ENCODE measurements at regions of chr6 and their contacts with region 1.

Region 1: GRCh38 chr6:39239527-39240154 is 10.4 kb upstream of the KCNK5 start:
- DNase-seq: no peak
- H3K4me3 ChIP-seq: no peak overlapping the region
- H3K27ac ChIP-seq: peak overlapping the region in 3 of 4 donors; percentile 9 to 35 (median 23)
- H3K4me1 ChIP-seq: peaks cover 0 to 8% (median 2%) of the 10 kb centered on the region in 4 donors
- H3K27me3 ChIP-seq: no peaks in the 10 kb centered on the region
- CTCF ChIP-seq: no peak
- EP300 ChIP-seq: no peak
- POLR2A ChIP-seq: no peak

Region 2: DNA sequence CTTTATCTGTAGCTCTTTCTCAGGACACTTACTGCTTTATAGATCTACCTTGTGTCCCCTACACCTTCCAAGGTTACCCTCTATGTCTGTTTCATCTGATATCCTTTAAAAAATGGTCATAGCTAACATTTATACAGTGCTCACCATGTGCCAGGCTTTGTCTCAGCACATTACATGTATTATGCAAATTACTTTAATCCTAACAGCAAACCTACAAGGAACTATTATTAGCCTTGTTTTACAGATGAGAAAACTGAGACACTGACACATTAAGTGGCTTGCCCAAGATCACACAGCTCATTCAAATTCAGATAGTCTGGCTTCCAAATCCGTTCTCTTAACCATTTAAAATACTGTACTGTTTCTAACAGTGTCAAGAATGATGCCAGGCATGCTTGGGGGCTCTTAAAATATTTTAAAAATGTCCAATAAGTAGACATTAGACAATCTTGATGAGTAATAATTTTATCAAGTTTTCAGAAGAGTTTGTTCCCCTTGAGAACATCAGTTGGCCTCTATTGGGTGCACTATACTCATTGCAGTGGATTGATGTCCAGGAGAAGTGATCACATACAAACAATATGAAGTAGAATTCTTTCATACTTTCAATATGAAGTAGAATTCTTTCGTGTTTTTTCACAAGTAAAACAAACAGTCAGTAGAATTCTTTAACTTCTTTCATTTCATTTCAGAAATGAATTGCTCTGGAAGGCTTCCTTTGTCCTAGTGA is 455.0 kb before region 1 on chr6:
- in situ Hi-C with region 1: no loop called
- intact Hi-C with region 1: no loop called
- DNase-seq: no peak
- H3K4me3 ChIP-seq: no peak overlapping the region
- H3K27ac ChIP-seq: no peak overlapping the region
- H3K4me1 ChIP-seq: no peaks in the 10 kb centered on the region
- H3K27me3 ChIP-seq: peaks cover 19% of the 10 kb centered on the region
- CTCF ChIP-seq: no peak
- EP300 ChIP-seq: no peak
- POLR2A ChIP-seq: no peak

Region 3: GRCh38 chr6:40244699-40245098 is 1005.1 kb after region 1 on chr6:
- in situ Hi-C with region 1: no loop called
- intact Hi-C with region 1: loop called (anchors 5 kb)
- DNase-seq: no peak
- H3K4me3 ChIP-seq: no peak overlapping the region
- H3K27ac ChIP-seq: no peak overlapping the region
- H3K4me1 ChIP-seq: no peaks in the 10 kb centered on the region
- H3K27me3 ChIP-seq: no peaks in the 10 kb centered on the region
- CTCF ChIP-seq: no peak
- EP300 ChIP-seq: no peak
- POLR2A ChIP-seq: no peak